Activated CD4-positive, alpha-beta T cell treated with anti-CD3 and anti-CD28 coated beads, Interleukin-2, amount 10 ng/mL, durations not matched to agents 24 days and 14 days (primary cell): ENCODE measurements at regions of chrX and their contacts with region 1.

Region 1: DNA sequence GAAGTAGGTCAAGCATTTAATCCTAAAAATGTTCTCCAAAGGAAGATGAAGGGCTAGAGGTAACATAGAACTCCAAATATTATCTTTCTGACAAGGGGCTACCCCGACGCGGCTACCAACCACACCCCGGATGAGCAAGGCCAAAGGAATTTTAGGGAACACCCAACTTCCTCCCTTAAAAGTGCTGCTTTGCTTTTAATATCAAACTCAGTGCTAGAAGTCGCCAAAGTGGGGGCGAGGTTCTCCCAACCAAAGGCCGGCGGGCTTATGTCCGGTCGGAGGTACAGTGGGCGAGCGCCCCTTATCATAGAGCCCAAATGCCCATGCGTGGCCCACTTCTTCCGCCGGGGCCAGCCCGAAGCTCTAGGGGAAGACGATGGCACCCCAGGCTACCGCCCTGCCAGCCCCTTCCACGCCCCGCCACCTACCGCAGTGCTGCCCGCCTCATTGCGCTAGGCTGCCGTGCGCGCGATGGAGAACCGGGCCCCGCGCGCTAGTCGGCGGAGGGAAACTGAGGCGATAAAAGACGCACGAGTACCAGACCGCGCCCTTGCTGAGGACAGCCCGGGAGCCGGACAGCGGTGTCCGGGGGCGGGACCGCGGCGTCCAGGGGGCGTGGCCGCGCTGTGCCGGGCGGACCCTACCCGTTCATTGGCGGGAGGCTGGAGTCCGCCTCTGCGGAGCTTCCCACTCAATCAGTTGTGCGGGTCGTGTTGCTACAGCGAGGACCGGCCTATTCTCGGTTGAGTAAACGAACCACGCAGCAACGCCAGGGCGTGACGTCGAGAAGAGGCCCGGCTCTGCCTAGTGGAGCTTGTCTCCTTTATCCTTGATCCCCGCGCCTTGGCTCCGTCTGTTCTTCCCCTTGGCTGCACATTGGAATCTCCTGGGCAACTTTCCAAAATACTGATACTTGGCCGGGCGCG is at the start of gene ACOT9:
- DNase-seq: peak; percentile 94
- H3K4me3 Mint-ChIP-seq: peak within 1 kb of the TSS; percentile 93
- H3K27ac Mint-ChIP-seq: peak within 1 kb of the TSS; percentile 91
- H3K4me1 Mint-ChIP-seq: peaks cover 21% of the 10 kb centered on the region
- H3K27me3 Mint-ChIP-seq: no peaks in the 10 kb centered on the region
- total RNA-seq, gene ACOT9: 53.3 and 54.6 TPM in 2 replicates

Region 2: DNA sequence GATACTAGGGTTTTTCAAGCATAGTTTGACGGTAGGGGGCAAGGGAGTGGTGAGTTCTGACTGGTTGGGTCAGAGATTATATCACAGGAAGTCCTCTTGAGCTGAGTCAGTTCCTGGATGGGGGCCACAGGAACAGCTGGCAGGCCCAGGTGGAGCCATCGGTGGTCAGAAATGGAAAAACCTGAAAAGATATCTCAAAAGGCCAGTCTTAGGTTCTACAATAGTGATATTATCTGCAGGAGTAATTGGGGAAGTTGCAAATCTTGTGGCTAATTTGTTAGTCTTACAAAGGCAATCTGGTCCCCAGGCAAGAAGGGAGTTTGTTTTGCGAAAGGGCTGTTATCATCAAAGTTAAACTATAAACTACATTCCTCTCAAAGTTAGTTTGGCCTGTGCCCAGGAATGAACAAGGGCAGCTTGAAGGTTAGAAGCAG is 249.0 kb before region 1 on chrX:
- intact Hi-C with region 1: no loop called
- DNase-seq: no peak
- H3K4me3 Mint-ChIP-seq: no peak overlapping the region
- H3K27ac Mint-ChIP-seq: no peak overlapping the region
- H3K4me1 Mint-ChIP-seq: peaks cover 5% of the 10 kb centered on the region
- H3K27me3 Mint-ChIP-seq: no peaks in the 10 kb centered on the region

Region 3: DNA sequence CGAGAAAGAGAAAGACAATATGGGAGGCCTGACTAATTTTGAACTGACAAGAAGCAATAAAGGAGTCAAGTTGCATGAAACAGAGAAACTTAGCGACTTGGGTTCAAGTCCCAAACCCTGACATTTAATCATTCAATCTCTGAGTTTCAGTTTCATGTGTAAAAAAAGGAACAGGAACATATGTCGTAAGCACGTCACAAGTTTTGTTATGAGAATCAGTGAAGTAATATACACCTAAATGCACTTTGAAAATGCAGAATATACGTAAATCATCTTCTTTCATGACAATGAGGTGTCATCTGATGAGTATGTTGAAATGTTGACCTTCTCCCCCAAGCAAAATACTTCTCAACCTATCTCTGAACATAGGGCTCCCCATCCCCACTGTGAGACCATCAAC is 10.3 kb before region 1 on chrX:
- intact Hi-C with region 1: loop called (anchors 1 kb)
- DNase-seq: peak; percentile 61
- H3K4me3 Mint-ChIP-seq: peak overlapping the region; percentile 59
- H3K27ac Mint-ChIP-seq: peak overlapping the region; percentile 89
- H3K4me1 Mint-ChIP-seq: peaks cover 20% of the 10 kb centered on the region
- H3K27me3 Mint-ChIP-seq: no peaks in the 10 kb centered on the region

Region 4: DNA sequence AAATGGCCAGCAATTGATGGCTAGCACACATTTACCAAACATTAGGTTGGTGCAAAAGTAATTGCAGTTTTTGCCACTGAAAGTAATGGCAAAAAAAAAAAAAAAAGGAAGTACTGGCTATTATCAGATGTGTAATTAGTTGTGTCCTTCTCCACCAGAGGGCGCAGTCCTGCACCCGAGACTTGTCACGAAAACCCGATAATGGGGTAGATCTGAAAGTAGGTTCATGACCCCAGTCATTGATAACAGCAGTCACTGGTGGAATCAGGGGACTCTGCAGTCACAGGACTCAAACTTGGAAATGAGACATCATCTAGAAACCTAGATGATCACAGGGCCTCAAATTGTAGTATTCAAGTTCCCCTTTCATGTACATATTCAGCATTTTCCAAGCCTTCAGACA is 13.2 kb after region 1 on chrX:
- intact Hi-C with region 1: loop called (anchors 2 kb)
- DNase-seq: peak; percentile 88
- H3K4me3 Mint-ChIP-seq: no peak overlapping the region
- H3K27ac Mint-ChIP-seq: peak overlapping the region; percentile 20
- H3K4me1 Mint-ChIP-seq: peaks cover 6% of the 10 kb centered on the region
- H3K27me3 Mint-ChIP-seq: no peaks in the 10 kb centered on the region